Mammary epithelial cell (primary cell): ENCODE measurements at regions of chr13 and their contacts with region 1.

Region 1: DNA sequence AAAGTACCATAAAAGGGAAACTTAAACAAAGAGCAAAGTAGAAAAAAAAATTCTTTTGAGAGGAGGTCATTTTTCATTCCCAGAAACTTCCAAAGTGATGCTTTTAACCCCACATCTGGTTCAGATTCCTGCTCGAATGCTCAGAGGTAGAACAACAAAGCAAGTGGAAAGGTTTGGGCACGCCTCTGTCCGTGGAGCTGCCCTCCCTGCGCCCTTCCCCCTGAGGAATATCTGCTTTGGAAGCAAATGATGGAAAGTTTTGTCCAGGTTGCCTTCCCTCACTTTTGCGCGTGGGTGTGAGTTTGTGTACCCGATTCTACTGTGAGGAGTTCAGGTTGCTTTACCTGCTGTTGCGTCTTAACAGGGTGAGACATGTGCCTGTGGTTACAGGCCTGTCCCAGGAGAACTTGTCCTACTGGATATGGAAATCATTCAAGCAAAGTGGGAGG is 110.2 kb downstream of the KLF5 start:
- DNase-seq: peak; percentile 94
- H3K4me3 ChIP-seq: no peak overlapping the region
- H3K27ac ChIP-seq: peak overlapping the region; percentile 98
- H3K4me1 ChIP-seq: peaks cover 50% of the 10 kb centered on the region
- H3K27me3 ChIP-seq: no peaks in the 10 kb centered on the region
- CTCF ChIP-seq: no peak

Region 2: GRCh38 chr13:73081256-73081915 is 87.6 kb before region 1 on chr13:
- CTCF ChIA-PET with region 1: no interaction called
- dilution Hi-C with region 1: no loop called
- in situ Hi-C with region 1: no loop called
- intact Hi-C with region 1: loop called (anchors 5 kb)
- DNase-seq: peak; percentile 45
- H3K4me3 ChIP-seq: no peak overlapping the region
- H3K27ac ChIP-seq: peak overlapping the region; percentile 11
- H3K4me1 ChIP-seq: peaks cover 8% of the 10 kb centered on the region
- H3K27me3 ChIP-seq: no peaks in the 10 kb centered on the region
- CTCF ChIP-seq: no peak

Region 3: GRCh38 chr13:73200406-73200805 is 31.4 kb after region 1 on chr13:
- CTCF ChIA-PET with region 1: no interaction called
- dilution Hi-C with region 1: loop called (anchors 5 kb)
- in situ Hi-C with region 1: no loop called
- intact Hi-C with region 1: no loop called
- DNase-seq: no peak
- H3K4me3 ChIP-seq: no peak overlapping the region
- H3K27ac ChIP-seq: peak overlapping the region; percentile 81
- H3K4me1 ChIP-seq: peaks cover 16% of the 10 kb centered on the region
- H3K27me3 ChIP-seq: no peaks in the 10 kb centered on the region
- CTCF ChIP-seq: no peak

Region 4: GRCh38 chr13:73465617-73465971 is 296.6 kb after region 1 on chr13:
- CTCF ChIA-PET with region 1: no interaction called
- dilution Hi-C with region 1: no loop called
- in situ Hi-C with region 1: no loop called
- intact Hi-C with region 1: no loop called
- DNase-seq: peak; percentile 96
- H3K4me3 ChIP-seq: no peak overlapping the region
- H3K27ac ChIP-seq: peak overlapping the region; percentile 94
- H3K4me1 ChIP-seq: peaks cover 31% of the 10 kb centered on the region
- H3K27me3 ChIP-seq: no peaks in the 10 kb centered on the region
- CTCF ChIP-seq: peak; percentile 11 to 34